ENCODE measurements at regions of chr17 and their contacts with region 1.

Region 1: DNA sequence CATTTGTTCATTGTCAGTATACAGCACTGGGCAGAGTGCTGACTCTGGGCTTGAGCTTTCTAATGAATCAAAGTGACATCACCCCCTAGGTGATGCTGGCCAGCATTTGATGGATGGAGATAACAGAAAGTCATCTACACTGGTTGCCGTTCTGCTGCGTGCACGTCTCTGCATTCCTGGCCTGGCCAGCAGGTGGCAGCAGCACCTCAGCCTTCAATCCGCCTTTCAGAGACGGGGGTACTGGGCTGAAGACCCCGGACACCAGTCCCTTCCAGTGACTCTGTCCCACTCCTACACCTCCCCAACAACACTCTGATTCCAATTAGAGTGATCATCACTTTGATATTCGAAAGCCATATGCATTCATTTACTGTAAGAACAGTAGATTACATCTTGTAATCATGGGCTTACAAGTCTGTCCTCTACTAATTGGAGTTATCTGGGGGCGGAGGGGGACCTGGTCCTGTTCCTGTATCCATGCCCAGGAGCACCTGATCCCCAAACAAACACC is 6.0 kb downstream of the CPSF4L start:
- DNase-seq: peak in 2 of 3 donors; percentile 71 to 73
- ATAC-seq: peak; percentile 81
- H3K4me3 ChIP-seq: no peak overlapping the region
- H3K4me1 ChIP-seq: no peaks in the 10 kb centered on the region
- CTCF ChIP-seq: peak; percentile 93

Region 2: DNA sequence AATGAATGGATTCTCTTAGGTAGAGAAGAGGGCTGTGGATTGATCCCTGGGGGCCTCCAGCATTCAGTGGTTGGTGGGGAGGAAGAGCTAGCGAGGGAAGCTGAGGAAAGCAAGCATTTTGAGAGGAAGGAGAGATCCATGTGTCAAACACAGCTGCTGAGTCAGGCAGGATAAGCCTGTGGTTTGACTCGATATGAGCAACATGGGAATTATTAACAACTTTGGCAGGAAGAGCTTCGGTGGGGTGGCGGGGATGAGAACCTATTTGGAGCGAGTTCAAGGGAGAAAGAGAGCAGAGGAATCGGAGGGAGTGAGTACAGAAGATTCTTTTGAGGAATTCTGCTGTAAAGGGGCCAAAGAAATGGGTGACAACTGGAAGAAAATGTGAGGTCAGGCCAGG is 115.6 kb after region 1 on chr17:
- intact Hi-C with region 1: loop called (anchors 2 kb)
- DNase-seq: no peak
- ATAC-seq: no peak
- H3K4me3 ChIP-seq: no peak overlapping the region
- H3K4me1 ChIP-seq: no peaks in the 10 kb centered on the region
- CTCF ChIP-seq: no peak